ENCODE measurements at regions of chr15 and their contacts with region 1.

Region 1: GRCh38 chr15:58761010-58761388 is 10.1 kb upstream of the MINDY2 start:
- DNase-seq: peak; percentile 34
- H3K4me3 Mint-ChIP-seq: no peak overlapping the region
- H3K27ac Mint-ChIP-seq: no peak overlapping the region
- H3K4me1 Mint-ChIP-seq: peaks cover 2% of the 10 kb centered on the region
- H3K27me3 Mint-ChIP-seq: peaks cover 6% of the 10 kb centered on the region

Region 2: GRCh38 chr15:58227706-58228543 is 533.1 kb before region 1 on chr15:
- CTCF ChIA-PET with region 1: interaction called, 17 read pairs
- POLR2A ChIA-PET with region 1: no interaction called
- DNase-seq: peak; percentile 74
- H3K4me3 Mint-ChIP-seq: no peak overlapping the region
- H3K27ac Mint-ChIP-seq: no peak overlapping the region
- H3K4me1 Mint-ChIP-seq: peaks cover 10% of the 10 kb centered on the region
- H3K27me3 Mint-ChIP-seq: peaks cover 20% of the 10 kb centered on the region

Region 3: GRCh38 chr15:58889363-58889762 is 128.4 kb after region 1 on chr15:
- CTCF ChIA-PET with region 1: no interaction called
- POLR2A ChIA-PET with region 1: no interaction called
- DNase-seq: no peak
- H3K4me3 Mint-ChIP-seq: no peak overlapping the region
- H3K27ac Mint-ChIP-seq: no peak overlapping the region
- H3K4me1 Mint-ChIP-seq: no peaks in the 10 kb centered on the region
- H3K27me3 Mint-ChIP-seq: no peaks in the 10 kb centered on the region

Measured in activated CD4-positive, alpha-beta memory T cell treated with anti-CD3 and anti-CD28 coated beads, Interleukin-2, amount 10 ng/mL, durations not matched to agents 7 days and 5 days (primary cell).